IMR-90 (cell line): ENCODE measurements at regions of chr1 and their contacts with region 1.

Region 1: DNA sequence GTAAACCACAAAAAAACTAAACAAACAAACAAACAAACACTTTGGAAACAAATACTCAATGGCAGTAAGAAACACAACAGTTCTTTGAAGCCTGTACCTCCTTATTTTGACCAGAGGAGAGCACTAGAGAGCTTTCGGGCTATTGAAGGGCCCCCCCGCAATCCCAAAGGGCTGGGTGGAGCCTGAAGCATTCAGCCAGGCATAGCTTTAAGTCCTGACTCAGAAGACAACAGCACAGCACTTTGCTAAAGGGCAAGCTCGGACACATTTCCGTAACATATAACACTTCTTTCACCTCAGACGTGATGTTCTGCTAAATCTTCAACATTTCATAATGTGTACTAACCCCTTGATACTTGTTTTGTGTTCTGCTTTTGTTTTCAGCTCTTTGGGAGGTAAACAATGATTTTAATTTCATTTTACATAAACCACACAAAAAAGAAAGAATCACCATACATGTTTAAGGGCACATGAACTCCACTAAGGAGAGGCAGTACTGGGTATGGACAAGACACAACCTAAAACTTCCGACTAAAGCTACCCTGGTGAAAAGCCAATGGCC is 9.7 kb upstream of the SHCBP1L start:
- DNase-seq: peak; percentile 90
- ATAC-seq: peak; percentile 100
- H3K4me3 ChIP-seq: peak overlapping the region; percentile 20; the same call in 1 of the 2 replicates
- H3K27ac ChIP-seq: peak overlapping the region; percentile 77; the same call in 1 of the 2 replicates
- H3K4me1 ChIP-seq: no peaks in the 10 kb centered on the region
- H3K27me3 ChIP-seq: no peaks in the 10 kb centered on the region
- CTCF ChIP-seq: peak; percentile 97
- POLR2A ChIP-seq: peak; percentile 73
- RAD21 ChIP-seq: peak; percentile 99

Region 2: DNA sequence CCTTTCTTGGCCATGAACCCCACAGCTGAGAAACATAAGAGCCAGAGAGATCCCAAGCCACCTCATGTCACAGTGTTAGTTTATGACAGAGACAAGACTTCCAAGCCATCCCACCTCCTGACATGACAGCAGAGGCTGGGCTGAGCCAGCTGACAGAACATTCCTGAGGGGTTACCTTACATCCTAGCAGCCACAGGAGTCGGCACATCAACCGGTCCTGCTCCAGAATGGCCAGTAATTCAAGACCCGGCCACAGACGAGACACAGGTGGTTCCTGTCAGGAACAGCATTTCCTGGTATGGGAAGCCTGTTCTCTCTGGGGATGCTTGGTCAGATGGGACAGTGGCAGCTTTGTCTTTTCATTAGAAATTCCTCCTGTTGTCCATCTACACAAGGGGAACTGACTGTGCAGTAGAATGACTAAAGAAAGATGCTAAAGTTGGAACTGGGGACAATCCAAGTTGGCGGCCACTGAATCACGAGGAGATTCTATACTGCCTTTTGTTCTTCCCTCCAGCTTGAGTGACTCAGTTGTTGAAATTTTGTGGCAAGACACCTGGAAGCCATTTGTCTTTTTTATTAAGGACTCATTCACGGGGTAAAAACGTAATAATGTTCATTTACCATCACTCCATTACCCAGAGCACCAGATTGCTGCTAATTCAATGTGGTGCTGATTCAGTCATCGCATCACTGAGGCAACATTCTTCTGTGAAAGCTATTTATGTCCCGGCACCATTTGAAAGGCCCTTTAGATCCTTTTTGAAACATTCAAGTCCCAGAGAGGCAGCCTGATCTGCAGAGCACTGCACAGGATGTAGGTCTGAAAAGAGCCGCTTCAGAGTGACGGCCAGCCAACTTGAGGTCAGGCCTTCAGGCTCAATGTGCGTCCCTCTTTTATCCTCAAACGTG is 210.3 kb before region 1 on chr1:
- CTCF ChIA-PET with region 1: no interaction called
- POLR2A ChIA-PET with region 1: no interaction called
- dilution Hi-C with region 1: no loop called
- in situ Hi-C with region 1: no loop called
- intact Hi-C with region 1: no loop called
- DNase-seq: peak; percentile 62
- ATAC-seq: no peak; the same call in 1 of the 2 replicates
- H3K4me3 ChIP-seq: no peak overlapping the region
- H3K27ac ChIP-seq: no peak overlapping the region
- H3K4me1 ChIP-seq: peaks cover 2% of the 10 kb centered on the region
- H3K27me3 ChIP-seq: no peaks in the 10 kb centered on the region
- CTCF ChIP-seq: no peak
- POLR2A ChIP-seq: no peak
- RAD21 ChIP-seq: no peak

Region 3: DNA sequence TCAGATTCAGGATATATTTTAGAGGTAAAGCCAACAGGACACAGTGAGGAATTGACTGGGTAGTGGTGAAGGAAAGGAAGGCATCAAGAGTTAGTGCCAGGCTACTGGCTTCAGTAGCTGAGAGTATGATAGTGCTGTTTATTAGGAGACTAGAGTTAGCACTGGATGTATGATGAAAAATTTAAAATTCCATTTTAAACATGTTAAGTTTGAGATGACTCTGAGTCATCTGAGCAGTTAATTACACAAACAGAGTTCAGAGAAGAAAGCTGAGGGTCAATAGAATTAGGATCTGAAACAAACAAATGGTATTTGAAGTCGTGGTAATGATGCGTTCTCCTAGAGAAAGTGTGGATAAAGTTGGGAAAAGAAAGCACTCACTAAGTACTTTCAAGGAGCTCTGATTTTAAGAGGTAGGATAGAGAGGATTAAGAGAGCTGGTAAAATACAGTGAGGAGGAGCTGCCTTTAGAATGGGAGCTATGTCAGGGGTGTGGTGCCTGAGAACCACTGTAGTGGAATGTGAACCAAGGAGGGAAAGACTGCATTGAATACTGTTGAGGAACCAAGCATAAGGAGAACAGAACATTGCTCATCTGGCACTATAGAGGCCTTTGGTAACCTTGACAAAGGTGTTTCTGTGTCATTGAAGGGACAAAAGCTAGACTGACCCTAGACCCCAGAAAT is 12.0 kb after region 1 on chr1:
- CTCF ChIA-PET with region 1: interaction called, 19 read pairs
- POLR2A ChIA-PET with region 1: no interaction called
- dilution Hi-C with region 1: no loop called
- in situ Hi-C with region 1: no loop called
- intact Hi-C with region 1: no loop called
- DNase-seq: no peak
- ATAC-seq: peak; percentile 63
- H3K4me3 ChIP-seq: no peak overlapping the region
- H3K27ac ChIP-seq: no peak overlapping the region
- H3K4me1 ChIP-seq: peaks cover 7% of the 10 kb centered on the region
- H3K27me3 ChIP-seq: no peaks in the 10 kb centered on the region
- CTCF ChIP-seq: no peak
- POLR2A ChIP-seq: no peak
- RAD21 ChIP-seq: no peak

Region 4: GRCh38 chr1:183101841-183102276 is 139.2 kb after region 1 on chr1:
- CTCF ChIA-PET with region 1: interaction called, 3 read pairs
- POLR2A ChIA-PET with region 1: no interaction called
- dilution Hi-C with region 1: no loop called
- in situ Hi-C with region 1: loop called (anchors 25 kb)
- intact Hi-C with region 1: loop called (anchors 5 kb)
- DNase-seq: no peak
- ATAC-seq: no peak
- H3K4me3 ChIP-seq: no peak overlapping the region
- H3K27ac ChIP-seq: no peak overlapping the region
- H3K4me1 ChIP-seq: peaks cover 33% of the 10 kb centered on the region
- H3K27me3 ChIP-seq: no peaks in the 10 kb centered on the region
- CTCF ChIP-seq: no peak
- POLR2A ChIP-seq: no peak
- RAD21 ChIP-seq: no peak

Region 5: DNA sequence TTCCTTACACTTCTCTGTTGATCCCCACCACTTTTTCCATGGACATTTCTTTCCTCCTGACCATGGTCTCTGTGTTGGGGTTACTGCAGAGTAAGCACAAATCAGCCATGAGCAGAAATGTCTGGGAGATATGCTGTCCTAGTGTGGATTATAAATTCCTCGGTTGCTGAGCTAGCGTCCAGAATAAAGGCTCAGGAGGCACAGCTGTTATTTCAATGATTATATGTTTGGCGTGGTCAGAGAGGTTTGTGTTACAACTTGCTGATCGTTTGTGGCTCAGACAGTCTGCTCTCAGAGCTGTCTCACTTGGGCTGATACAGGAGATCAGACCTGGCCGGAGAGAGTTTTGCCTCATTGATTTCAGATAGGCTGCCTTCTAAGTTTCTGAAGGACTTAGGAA is 186.0 kb after region 1 on chr1:
- CTCF ChIA-PET with region 1: interaction called, 3 read pairs
- POLR2A ChIA-PET with region 1: no interaction called
- dilution Hi-C with region 1: no loop called
- in situ Hi-C with region 1: no loop called
- intact Hi-C with region 1: loop called (anchors 2 kb)
- DNase-seq: peak; percentile 64
- ATAC-seq: peak; percentile 71
- H3K4me3 ChIP-seq: no peak overlapping the region
- H3K27ac ChIP-seq: no peak overlapping the region
- H3K4me1 ChIP-seq: peaks cover 5% of the 10 kb centered on the region; the same call in 1 of the 2 replicates
- H3K27me3 ChIP-seq: no peaks in the 10 kb centered on the region
- CTCF ChIP-seq: no peak
- POLR2A ChIP-seq: no peak
- RAD21 ChIP-seq: no peak

Region 6: DNA sequence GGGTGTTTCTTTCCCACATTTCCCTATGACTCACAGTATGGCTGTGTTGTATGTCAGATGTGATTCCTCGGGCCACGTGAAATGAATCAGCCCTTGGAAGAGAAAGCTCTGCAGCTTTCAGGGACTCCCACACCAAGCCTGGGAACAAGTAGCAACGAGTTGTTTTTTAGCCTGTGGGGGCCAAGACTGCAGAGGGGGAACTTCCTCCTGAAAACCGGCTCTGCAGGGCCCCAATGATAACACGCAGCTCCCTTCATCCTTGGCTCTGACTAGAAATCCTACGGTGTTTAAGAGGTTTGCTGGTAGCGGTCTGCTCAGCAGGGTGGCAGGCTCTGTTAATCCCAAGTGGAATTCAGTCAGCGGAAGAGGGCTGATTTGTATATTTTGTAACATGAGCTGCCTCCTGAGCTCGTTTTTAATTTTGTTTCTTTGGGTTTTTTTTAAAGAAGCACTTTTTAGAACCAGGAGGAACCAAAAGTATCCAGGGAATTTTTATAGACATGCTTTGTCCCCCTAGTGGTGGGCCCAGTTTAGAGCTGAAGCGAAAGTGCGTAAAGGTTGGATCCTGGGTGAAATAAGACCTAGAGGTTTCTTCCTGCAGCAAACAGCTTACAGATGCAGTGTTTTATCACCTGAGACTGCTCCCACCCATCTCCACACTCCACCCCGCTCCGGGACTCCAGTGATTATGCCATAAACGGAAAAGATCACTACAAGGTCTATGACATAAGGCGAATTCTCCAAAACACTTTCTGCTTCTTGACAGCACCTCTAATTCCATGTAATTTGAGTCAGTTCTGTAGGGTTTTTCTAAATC is 272.2 kb after region 1 on chr1:
- CTCF ChIA-PET with region 1: interaction called, 10 read pairs
- POLR2A ChIA-PET with region 1: no interaction called
- dilution Hi-C with region 1: no loop called
- in situ Hi-C with region 1: loop called (anchors 25 kb)
- intact Hi-C with region 1: loop called (anchors 1 kb)
- DNase-seq: peak; percentile 98
- ATAC-seq: peak; percentile 89
- H3K4me3 ChIP-seq: peak overlapping the region; percentile 41
- H3K27ac ChIP-seq: peak overlapping the region; percentile 76
- H3K4me1 ChIP-seq: peaks cover 13% of the 10 kb centered on the region
- H3K27me3 ChIP-seq: no peaks in the 10 kb centered on the region
- CTCF ChIP-seq: peak; percentile 74
- POLR2A ChIP-seq: peak; percentile 54; the same call in 1 of the 2 replicates
- RAD21 ChIP-seq: peak; percentile 47

Region 7: GRCh38 chr1:183318433-183318832 is 355.8 kb after region 1 on chr1:
- CTCF ChIA-PET with region 1: interaction called, 3 read pairs
- POLR2A ChIA-PET with region 1: no interaction called
- dilution Hi-C with region 1: no loop called
- in situ Hi-C with region 1: no loop called
- intact Hi-C with region 1: loop called (anchors 1 kb)
- DNase-seq: peak; percentile 95
- ATAC-seq: peak; percentile 97
- H3K4me3 ChIP-seq: no peak overlapping the region
- H3K27ac ChIP-seq: peak overlapping the region; percentile 20; the same call in 1 of the 2 replicates
- H3K4me1 ChIP-seq: peaks cover 10% of the 10 kb centered on the region
- H3K27me3 ChIP-seq: peaks cover 2% of the 10 kb centered on the region; the same call in 1 of the 2 replicates
- CTCF ChIP-seq: peak; percentile 81
- POLR2A ChIP-seq: no peak
- RAD21 ChIP-seq: peak; percentile 85

Region 8: GRCh38 chr1:183635606-183636333 is 673.1 kb after region 1 on chr1 and contains the start of gene ARPC5:
- CTCF ChIA-PET with region 1: no interaction called
- POLR2A ChIA-PET with region 1: no interaction called
- dilution Hi-C with region 1: no loop called
- in situ Hi-C with region 1: no loop called
- intact Hi-C with region 1: loop called (anchors 5 kb)
- DNase-seq: peak; percentile 98
- ATAC-seq: peak; percentile 85
- H3K4me3 ChIP-seq: peak within 1 kb of the TSS; percentile 85
- H3K27ac ChIP-seq: peak within 1 kb of the TSS; percentile 96
- H3K4me1 ChIP-seq: peaks cover 2% of the 10 kb centered on the region
- H3K27me3 ChIP-seq: no peaks in the 10 kb centered on the region
- CTCF ChIP-seq: no peak
- POLR2A ChIP-seq: peak; percentile 88
- RAD21 ChIP-seq: 0 out of 2 replicates have a peak, but pooled peaks have one; percentile 2
- total RNA-seq, gene ARPC5: 212 and 361 TPM in 2 replicates